GM10248 (cell line): ENCODE measurements at regions of chr2 and their contacts with region 1.

Region 1: GRCh38 chr2:71068218-71069035 is at the start of gene NAGK:
- DNase-seq: peak; percentile 96
- CTCF ChIP-seq: no peak

Region 2: DNA sequence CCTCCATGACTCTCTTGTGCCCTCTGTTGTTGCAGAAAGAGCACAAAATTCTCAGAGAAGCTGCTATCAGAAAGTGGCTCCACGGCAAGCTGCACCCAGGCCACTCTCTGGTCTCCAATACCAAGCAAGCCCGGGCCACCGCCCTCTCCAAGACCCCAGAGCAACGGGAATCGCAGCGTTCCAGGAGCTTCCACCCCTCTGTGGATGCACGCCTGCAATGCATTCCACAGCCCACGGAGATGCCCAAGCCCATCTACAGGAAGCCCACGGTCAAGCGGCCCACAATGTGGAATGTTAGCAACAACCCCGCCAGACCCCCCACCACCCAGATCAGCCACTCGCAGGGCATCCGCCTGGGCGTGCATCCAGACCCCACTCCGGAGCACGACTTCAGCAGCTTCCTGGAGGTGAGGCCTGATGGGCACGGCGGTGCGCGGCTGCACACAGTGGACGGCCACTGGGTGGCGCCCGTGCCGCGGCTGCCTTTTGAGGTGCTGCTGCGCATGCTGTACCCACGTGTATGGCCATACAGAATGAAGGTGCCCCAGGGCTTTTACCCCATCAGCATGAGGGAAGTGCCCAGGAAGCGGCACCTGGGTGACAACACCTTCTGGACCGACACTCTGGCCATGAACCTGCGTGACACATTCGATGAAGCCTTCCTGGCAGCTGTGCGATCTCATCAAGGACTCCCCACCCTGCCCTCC is 83.7 kb before region 1 on chr2:
- CTCF ChIA-PET with region 1: interaction called, 17 read pairs
- POLR2A ChIA-PET with region 1: no interaction called
- DNase-seq: peak; percentile 89
- CTCF ChIP-seq: peak; percentile 91

Region 3: GRCh38 chr2:71049365-71050360 is 18.8 kb before region 1 on chr2:
- CTCF ChIA-PET with region 1: interaction called, 49 read pairs
- POLR2A ChIA-PET with region 1: no interaction called
- DNase-seq: peak; percentile 51
- CTCF ChIP-seq: peak; percentile 52

Region 4: DNA sequence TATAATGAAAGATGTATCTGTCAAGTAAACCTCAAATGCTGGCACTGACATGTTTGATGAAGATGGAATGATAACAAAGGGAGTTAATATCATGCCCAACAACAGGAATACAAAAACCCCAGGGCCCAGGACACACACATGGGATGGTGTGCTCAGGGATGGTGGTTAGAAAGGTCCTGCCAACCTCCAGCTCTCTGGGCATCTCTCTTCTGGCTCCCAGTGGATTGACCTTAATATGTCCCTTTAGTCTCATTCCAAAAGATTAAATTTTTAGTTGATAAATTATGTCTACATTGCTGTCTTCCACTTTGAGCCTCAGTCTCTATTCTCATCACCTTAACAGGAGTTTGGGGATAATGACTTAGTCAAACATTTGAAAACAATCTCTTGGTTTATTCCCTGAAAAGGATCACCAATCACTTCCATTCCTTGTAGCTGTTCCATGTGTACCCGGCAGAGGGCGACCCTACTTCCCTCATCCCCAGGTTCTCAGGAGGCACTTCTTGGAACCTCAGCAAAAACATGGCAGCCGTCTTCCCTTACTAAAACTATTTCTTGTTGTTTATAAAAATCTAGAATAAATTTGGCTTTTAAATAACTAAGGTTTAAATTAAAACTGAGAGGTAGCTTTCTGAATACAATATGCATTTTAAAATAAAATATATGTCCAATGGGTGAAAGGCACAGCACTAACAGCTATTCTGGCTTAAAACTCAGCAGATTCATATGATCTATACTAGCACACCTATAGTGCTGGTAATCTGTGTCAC is 32.0 kb after region 1 on chr2:
- CTCF ChIA-PET with region 1: interaction called, 44 read pairs
- POLR2A ChIA-PET with region 1: interaction called, 3 read pairs
- DNase-seq: peak; percentile 61
- CTCF ChIP-seq: peak; percentile 72

Region 5: DNA sequence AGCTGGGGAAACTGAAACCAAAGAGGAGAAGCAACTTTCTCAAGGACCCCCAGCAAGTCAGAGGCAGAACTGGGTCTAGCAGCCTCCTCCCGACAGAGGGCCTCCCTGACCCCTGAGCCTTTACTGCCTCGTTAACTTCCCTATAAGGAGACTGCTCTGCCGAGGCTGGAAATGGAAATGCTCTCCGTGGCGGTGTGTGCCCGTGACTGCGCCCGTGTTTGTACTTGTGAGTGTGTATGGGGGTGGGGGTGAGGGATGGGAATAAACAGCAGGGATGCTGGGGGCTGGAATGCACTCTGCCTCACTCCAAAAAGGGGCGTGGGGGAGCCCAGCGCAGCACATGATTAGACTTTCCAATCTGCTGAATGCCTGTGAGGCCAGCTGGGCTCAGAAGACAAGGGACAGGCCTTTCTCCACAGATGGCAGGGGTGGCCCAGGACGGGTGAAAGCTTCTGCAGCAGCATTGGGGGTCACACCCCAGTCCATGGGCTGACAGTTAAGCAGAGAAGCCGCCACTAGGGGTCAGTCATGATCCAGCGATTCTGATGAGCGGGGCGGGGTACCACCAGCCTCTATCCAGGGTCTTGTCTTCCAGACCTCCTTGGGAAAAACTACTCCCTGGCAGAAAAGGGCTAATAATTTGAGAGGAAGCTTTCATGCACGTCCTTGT is 88.8 kb after region 1 on chr2:
- CTCF ChIA-PET with region 1: interaction called, 26 read pairs
- POLR2A ChIA-PET with region 1: no interaction called
- DNase-seq: peak; percentile 63
- CTCF ChIP-seq: peak; percentile 63